GM13977 (cell line): ENCODE measurements at regions of chr15 and their contacts with region 1.

Region 1: DNA sequence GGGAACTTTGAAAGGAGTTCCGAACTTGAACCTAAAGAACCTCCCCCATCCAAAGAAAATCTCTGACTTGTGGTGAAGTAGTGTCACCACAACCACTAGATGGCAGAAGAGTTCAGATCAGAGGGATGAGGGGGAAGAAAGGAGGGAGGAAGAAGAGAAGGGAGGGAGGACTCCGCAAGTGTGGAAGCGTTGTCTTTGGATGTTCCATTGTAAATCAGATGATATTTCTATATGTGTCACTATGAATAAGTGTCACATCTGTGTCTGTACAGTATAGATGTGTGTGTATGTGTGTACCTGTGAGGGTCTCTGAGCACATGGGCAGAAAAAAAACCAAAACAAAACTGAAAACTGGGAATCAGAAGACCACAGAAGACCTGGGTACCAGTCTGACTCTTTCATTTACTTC is 16.9 kb downstream of the SLC24A1 start:
- DNase-seq: peak; percentile 69
- CTCF ChIP-seq: peak; percentile 76

Region 2: GRCh38 chr15:65476903-65477302 is 161.8 kb before region 1 on chr15:
- in situ Hi-C with region 1: no loop called
- DNase-seq: no peak
- CTCF ChIP-seq: no peak

Region 3: DNA sequence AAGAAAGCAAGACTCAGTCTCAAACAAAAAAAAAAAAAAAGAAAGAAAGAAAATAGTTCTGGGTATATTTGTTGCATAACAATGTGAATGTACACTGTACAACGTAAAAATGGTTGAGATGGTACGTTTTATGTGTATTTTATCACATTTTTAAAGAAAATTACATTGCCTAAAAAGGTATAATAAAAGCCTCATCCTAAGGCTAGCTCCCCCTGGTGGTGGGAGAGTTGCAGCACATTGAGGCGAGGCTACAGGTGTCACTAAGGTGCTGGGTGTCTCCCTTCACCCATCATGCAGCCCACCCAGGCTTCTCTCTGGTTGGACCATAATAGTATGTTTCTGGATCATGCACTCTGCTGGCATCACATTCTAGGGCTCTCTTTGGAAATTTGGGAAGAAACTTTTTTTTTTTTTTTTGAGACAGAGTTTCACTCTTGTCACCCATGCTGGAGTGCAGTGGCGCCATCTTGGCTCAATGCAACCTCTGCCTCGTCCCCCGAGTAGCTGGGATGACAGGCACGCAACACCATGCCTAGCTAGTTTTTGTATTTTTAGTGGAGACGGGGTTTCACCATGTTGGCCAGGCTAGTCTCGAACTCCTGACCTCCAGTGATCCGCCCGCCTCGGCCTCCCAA is 218.3 kb after region 1 on chr15:
- in situ Hi-C with region 1: loop called (anchors 10 kb)
- DNase-seq: peak; percentile 45
- CTCF ChIP-seq: peak; percentile 86